Heart right ventricle (tissue), 16 donors: ENCODE measurements at regions of chr16 and their contacts with region 1.

Region 1: GRCh38 chr16:1125471-1125870 is 27.4 kb upstream of the CACNA1H start:
- DNase-seq: no peak
- ATAC-seq: peak in 2 of 8 donors; percentile 26 to 43
- H3K4me3 ChIP-seq: no peak overlapping the region
- H3K27ac ChIP-seq: no peak overlapping the region
- H3K4me1 ChIP-seq: no peaks in the 10 kb centered on the region
- H3K27me3 ChIP-seq: peaks cover 0 to 64% (median 45%) of the 10 kb centered on the region in 7 donors
- CTCF ChIP-seq: no peak

Region 2: DNA sequence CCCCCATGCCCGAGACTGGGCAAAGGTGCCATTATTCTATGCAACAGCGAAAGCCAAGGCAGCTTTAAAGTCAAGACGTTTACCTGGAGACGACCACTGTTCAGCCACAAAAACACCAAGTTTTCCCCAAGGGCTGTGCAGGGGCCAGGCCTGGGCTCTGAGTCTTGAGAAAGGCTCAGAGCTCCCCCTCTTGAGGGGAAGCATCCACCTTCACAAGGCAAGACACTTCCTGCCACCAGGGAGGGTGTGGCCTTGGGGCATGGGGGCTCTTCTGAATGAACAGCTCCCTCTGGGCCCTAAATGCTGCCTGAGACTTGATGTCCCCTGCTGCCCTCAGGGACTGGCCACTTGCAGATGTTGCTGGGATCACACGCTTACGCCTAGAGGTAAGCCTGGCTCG is 816.0 kb before region 1 on chr16:
- intact Hi-C with region 1: loop called in 1 of 10 experiments (anchors 5 kb)
- DNase-seq: no peak
- ATAC-seq: no peak
- H3K4me3 ChIP-seq: no peak overlapping the region
- H3K27ac ChIP-seq: no peak overlapping the region
- H3K4me1 ChIP-seq: no peaks in the 10 kb centered on the region
- H3K27me3 ChIP-seq: no peaks in the 10 kb centered on the region
- CTCF ChIP-seq: no peak

Region 3: GRCh38 chr16:894841-895240 is 230.6 kb before region 1 on chr16:
- intact Hi-C with region 1: no loop called
- DNase-seq: no peak
- ATAC-seq: no peak
- H3K4me3 ChIP-seq: no peak overlapping the region
- H3K27ac ChIP-seq: no peak overlapping the region
- H3K4me1 ChIP-seq: peaks cover 0 to 11% (median 8%) of the 10 kb centered on the region in 9 donors
- H3K27me3 ChIP-seq: no peaks in the 10 kb centered on the region
- CTCF ChIP-seq: peak in 1 of 9 donors; percentile 8

Region 4: GRCh38 chr16:1221628-1222552 is 96.4 kb after region 1 on chr16:
- intact Hi-C with region 1: no loop called
- DNase-seq: no peak
- ATAC-seq: no peak
- H3K4me3 ChIP-seq: no peak overlapping the region
- H3K27ac ChIP-seq: no peak overlapping the region
- H3K4me1 ChIP-seq: no peaks in the 10 kb centered on the region
- H3K27me3 ChIP-seq: no peaks in the 10 kb centered on the region
- CTCF ChIP-seq: no peak

Region 5: DNA sequence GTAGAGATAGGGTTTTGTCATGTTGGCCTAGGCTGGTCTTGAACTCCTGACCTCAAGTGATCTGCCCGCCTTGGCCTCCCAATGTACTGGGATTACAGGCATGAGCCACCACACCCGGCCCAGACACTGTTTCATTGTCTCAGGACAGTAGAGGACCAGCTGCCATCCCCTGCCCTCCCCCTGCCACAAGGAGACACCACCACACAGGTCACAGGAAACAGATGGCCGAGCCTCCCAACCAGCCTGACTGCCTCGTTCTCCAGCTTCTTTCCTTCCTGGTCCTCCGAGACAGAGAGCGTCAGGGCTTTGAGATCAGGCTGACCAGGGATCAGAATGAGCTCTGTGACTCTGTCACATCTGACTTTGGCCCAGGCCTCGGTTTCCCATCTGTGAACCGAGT is 1163.3 kb after region 1 on chr16:
- intact Hi-C with region 1: no loop called
- DNase-seq: no peak
- ATAC-seq: no peak
- H3K4me3 ChIP-seq: no peak overlapping the region
- H3K27ac ChIP-seq: no peak overlapping the region
- H3K4me1 ChIP-seq: no peaks in the 10 kb centered on the region
- H3K27me3 ChIP-seq: no peaks in the 10 kb centered on the region
- CTCF ChIP-seq: no peak